GM12878 (cell line): ENCODE measurements at regions of chr3 and their contacts with region 1.

Region 1: DNA sequence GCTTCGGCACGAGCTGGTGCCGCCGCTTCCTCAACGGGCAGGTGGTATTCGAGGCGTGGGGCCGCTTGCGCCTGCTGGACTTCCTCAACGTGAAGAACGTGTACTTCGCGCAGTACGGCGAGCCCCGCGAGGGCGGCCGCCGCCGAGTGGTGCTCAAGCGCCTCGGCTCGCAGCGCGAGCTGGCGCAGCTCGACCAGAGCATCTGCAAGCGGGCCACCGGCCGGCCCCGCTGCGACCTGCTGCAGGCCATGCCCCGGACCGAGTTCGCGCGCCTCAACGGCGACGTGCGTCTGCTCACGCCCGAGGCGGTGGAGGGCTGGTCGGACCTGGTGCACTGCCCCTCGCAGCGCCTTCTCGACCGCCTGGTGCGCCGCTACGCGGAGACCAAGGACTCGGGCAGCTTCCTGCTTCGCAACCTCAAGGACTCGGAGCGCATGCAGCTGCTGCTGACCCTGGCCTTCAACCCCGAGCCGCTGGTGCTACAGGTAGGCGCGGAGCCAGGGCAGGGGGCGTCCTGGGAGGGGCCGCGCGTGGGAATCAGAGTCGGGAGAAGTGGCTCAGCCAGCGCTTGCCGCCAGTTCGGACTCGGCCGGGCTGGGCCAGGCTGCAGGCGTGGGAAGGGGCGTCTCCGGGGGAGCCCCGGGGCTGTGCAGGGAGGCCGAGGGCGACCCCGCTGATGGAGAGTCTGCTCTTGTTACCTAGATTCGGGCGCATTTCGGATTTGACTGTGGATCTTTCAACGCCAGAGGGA is 1.1 kb downstream of the DIPK2A start:
- DNase-seq: no peak
- ATAC-seq: peak; percentile 62
- H3K4me3 ChIP-seq: peak overlapping the region; percentile 87
- H3K27ac ChIP-seq: peak overlapping the region; percentile 91
- H3K4me1 ChIP-seq: no peaks in the 10 kb centered on the region
- H3K27me3 ChIP-seq: no peaks in the 10 kb centered on the region
- CTCF ChIP-seq: peak; percentile 25 to 48 (median 44); a peak in 4 of 6 replicates
- EP300 ChIP-seq: no peak
- POLR2A ChIP-seq: peak; percentile 62
- RAD21 ChIP-seq: peak; percentile 24; the same call in 1 of the 2 replicates

Region 2: GRCh38 chr3:143207338-143207961 is 765.2 kb before region 1 on chr3:
- CTCF ChIA-PET with region 1: no interaction called
- POLR2A ChIA-PET with region 1: no interaction called
- RAD21 ChIA-PET with region 1: no interaction called
- SMC1A ChIA-PET with region 1: no interaction called
- in situ Hi-C with region 1: no loop called
- intact Hi-C with region 1: no loop called
- DNase-seq: peak; percentile 95
- ATAC-seq: peak; percentile 96
- H3K4me3 ChIP-seq: no peak overlapping the region
- H3K27ac ChIP-seq: peak overlapping the region; percentile 62
- H3K4me1 ChIP-seq: peaks cover 27% of the 10 kb centered on the region
- H3K27me3 ChIP-seq: no peaks in the 10 kb centered on the region
- CTCF ChIP-seq: no peak
- EP300 ChIP-seq: peak in 1 of 2 experiments; percentile 44; a peak in 2 of 4 replicates
- POLR2A ChIP-seq: no peak
- RAD21 ChIP-seq: peak; percentile 13; the same call in 1 of the 2 replicates

Region 3: DNA sequence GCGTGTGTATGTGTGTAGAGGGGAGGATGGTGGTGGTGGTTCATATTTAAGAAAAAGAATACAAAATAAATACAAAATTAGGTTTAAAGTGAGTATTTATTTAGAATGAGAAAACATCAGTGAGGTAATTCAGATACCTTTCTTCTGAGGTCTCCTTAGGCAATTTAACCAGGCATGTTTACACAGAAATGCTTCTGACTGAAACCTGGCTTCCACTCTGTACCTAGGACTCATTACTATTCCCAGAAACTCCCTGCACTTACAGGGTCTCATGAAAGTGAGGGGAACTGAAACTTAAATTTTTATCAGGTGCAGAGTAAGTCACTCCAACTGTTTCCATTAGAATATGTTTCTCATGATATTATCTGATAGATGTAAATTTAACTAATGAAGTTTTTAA is 11.3 kb before region 1 on chr3:
- CTCF ChIA-PET with region 1: interaction called, 11 read pairs
- POLR2A ChIA-PET with region 1: no interaction called
- RAD21 ChIA-PET with region 1: no interaction called
- SMC1A ChIA-PET with region 1: interaction called, 4 read pairs
- in situ Hi-C with region 1: no loop called
- intact Hi-C with region 1: no loop called
- DNase-seq: no peak
- ATAC-seq: no peak
- H3K4me3 ChIP-seq: no peak overlapping the region
- H3K27ac ChIP-seq: no peak overlapping the region
- H3K4me1 ChIP-seq: no peaks in the 10 kb centered on the region; the same call in 1 of the 2 replicates
- H3K27me3 ChIP-seq: no peaks in the 10 kb centered on the region
- CTCF ChIP-seq: no peak
- EP300 ChIP-seq: no peak
- POLR2A ChIP-seq: no peak
- RAD21 ChIP-seq: no peak

Region 4: DNA sequence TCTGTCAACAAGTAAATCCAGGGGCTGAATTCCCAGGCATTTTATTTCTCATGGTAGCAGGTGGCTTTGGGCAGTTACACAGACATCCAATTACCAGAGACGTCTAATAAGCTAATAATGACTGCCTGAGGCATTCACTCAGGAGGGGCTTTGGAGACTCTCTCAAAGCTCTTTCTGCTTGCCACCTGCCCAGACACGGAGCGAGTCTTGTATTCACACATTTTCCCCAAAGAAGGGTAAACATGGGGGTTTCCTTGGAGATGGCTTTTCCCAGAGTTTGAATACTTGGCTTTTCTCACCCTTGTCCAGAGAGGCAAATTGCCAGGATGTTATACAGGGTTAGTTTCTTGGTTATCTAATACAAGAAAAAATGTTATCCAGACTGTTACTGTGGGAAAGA is 131.5 kb after region 1 on chr3:
- CTCF ChIA-PET with region 1: no interaction called
- POLR2A ChIA-PET with region 1: no interaction called
- RAD21 ChIA-PET with region 1: no interaction called
- SMC1A ChIA-PET with region 1: no interaction called
- in situ Hi-C with region 1: no loop called
- intact Hi-C with region 1: no loop called
- DNase-seq: no peak
- ATAC-seq: no peak
- H3K4me3 ChIP-seq: no peak overlapping the region
- H3K27ac ChIP-seq: no peak overlapping the region
- H3K4me1 ChIP-seq: no peaks in the 10 kb centered on the region
- H3K27me3 ChIP-seq: no peaks in the 10 kb centered on the region
- CTCF ChIP-seq: no peak
- EP300 ChIP-seq: no peak
- POLR2A ChIP-seq: no peak
- RAD21 ChIP-seq: no peak

Region 5: DNA sequence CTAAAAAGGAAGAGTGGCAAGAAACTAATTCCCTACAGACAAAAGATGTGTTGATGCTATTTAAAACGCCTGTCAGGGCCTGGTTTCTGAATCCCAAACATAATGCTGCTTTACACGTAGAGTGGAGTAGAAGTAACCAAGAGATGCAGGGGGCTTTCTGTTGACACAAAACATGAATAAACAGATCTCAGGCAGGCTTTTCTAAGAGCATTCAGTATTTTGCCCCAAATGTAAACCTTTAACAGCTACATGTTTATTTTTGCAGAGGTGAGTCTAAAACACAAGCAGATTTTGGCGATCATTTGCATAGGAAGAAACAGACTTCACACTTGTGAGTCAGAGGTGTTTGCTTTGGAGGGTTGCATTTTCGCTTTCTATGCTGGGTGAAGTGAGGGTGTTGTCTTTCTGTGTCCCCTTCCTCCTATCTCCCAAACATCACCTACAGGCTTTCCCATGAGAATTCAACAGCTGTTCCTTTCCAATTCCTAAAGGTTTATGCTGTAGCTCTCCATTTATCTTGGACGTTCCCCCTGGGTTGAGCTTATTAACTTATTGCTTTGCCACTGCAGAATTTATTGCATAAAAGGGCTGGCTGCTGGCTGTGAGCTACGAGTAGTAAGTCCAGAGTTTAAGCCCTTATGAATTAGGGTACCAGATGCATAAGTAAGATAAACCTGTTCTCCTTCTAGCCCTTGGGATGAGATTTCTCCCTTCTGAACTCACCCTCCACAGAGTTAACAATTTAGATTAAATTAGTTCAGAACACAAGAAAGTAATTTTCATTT is 155.6 kb after region 1 on chr3:
- CTCF ChIA-PET with region 1: interaction called, 16 read pairs
- POLR2A ChIA-PET with region 1: interaction called, 10 read pairs
- RAD21 ChIA-PET with region 1: interaction called, 9 read pairs
- SMC1A ChIA-PET with region 1: interaction called, 8 read pairs
- in situ Hi-C with region 1: no loop called
- intact Hi-C with region 1: loop called (anchors 2 kb)
- DNase-seq: peak; percentile 78
- ATAC-seq: peak; percentile 94
- H3K4me3 ChIP-seq: peak overlapping the region; percentile 56; the same call in 1 of the 2 replicates
- H3K27ac ChIP-seq: peak overlapping the region; percentile 91
- H3K4me1 ChIP-seq: peaks cover 19% of the 10 kb centered on the region; the same call in 1 of the 2 replicates
- H3K27me3 ChIP-seq: no peaks in the 10 kb centered on the region
- CTCF ChIP-seq: no peak
- EP300 ChIP-seq: peak; percentile 25 to 57; a peak in 1 of 4 replicates
- POLR2A ChIP-seq: peak; percentile 42; the same call in 1 of the 2 replicates
- RAD21 ChIP-seq: no peak

Region 6: GRCh38 chr3:144429719-144430121 is 457.0 kb after region 1 on chr3:
- CTCF ChIA-PET with region 1: no interaction called
- POLR2A ChIA-PET with region 1: no interaction called
- RAD21 ChIA-PET with region 1: no interaction called
- SMC1A ChIA-PET with region 1: no interaction called
- in situ Hi-C with region 1: loop called (anchors 10 kb)
- intact Hi-C with region 1: loop called (anchors 5 kb)
- DNase-seq: peak; percentile 74
- ATAC-seq: peak; percentile 89
- H3K4me3 ChIP-seq: no peak overlapping the region
- H3K27ac ChIP-seq: no peak overlapping the region
- H3K4me1 ChIP-seq: no peaks in the 10 kb centered on the region
- H3K27me3 ChIP-seq: no peaks in the 10 kb centered on the region
- CTCF ChIP-seq: no peak
- EP300 ChIP-seq: peak; percentile 29 to 52; a peak in 1 of 4 replicates
- POLR2A ChIP-seq: no peak
- RAD21 ChIP-seq: no peak

Region 7: DNA sequence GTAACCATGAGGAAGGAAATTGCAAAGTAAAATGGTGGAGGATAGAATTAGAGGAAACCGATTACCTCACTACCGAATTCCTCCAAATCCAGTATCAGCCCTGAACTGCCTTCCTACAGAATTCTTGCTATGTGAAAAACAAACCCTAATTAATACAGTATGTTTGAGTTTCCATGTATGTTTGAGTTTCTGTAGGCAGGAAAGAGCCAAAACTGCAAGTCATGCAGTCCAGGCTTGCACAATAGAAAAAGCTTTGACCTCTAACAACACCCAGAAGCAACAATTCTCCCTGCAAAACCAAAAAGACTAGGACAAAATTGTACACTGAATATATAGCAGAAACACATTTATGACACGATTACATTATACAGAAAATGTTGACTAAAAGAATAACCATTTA is 613.7 kb after region 1 on chr3:
- CTCF ChIA-PET with region 1: interaction called, 3 read pairs
- POLR2A ChIA-PET with region 1: no interaction called
- RAD21 ChIA-PET with region 1: no interaction called
- SMC1A ChIA-PET with region 1: no interaction called
- in situ Hi-C with region 1: no loop called
- intact Hi-C with region 1: loop called (anchors 10 kb)
- DNase-seq: no peak
- ATAC-seq: no peak
- H3K4me3 ChIP-seq: no peak overlapping the region
- H3K27ac ChIP-seq: no peak overlapping the region
- H3K4me1 ChIP-seq: no peaks in the 10 kb centered on the region
- H3K27me3 ChIP-seq: no peaks in the 10 kb centered on the region
- CTCF ChIP-seq: no peak
- EP300 ChIP-seq: no peak
- POLR2A ChIP-seq: no peak
- RAD21 ChIP-seq: no peak